SK-MEL-5 (cell line): ENCODE measurements at regions of chr2 and their contacts with region 1.

Region 1: DNA sequence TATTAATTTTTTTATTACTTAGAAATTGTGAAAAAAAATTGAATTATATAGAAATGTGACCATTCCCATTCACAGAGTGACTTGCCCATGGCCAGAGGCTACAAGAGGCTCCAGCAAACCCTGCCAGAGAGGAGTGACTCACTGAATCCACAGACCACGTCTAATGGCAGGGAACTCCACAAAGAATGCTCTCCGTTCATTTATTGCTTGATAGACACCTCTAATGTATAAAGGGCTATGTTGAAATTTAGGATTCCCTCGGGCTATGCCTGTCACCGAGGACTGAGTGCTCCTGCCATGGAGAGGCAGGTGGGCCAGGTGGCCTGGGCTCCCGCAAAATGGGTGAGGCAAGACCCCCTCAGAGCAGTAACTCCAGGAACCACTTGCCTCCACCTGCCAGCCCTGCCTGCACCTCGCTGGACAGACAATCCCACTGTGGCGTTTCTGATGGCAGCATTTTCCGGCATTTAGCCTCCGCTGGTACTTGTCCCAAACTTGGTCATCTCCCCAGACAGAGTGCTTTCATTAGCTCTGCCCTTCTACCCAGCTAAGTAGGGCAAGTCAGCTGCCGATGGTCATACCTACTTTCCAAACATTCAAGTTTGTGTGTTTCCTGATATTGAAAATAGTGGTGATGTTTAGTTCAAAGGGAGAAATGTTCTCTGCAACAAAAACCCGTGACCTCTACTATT is 200.3 kb downstream of the PRKCE start:
- DNase-seq: peak; percentile 62

Region 2: DNA sequence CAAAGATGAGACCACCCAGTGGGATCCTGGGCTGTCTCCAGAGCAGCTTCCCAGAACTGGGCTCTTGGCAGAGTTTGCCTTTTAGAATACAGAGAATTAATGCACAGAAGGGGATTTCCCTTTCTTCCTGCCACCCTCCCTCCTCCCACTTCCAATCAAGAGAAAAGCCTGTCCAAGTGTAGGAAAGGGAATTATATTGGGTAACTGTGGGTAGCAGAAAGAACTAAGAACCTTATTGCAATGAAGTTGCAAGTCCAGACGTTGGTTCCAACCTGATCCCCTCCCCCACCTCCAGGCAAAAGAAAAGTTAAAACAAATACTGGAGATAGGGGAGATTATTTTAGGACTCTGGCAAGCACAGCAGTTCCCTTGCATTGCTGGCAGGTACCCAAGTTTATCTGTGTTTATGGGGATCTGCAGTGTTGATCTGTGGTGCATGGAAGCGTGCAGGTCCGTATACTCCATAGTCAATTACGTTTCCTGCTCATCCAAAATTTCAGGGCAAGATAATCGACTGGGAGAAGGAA is 86.0 kb before region 1 on chr2:
- in situ Hi-C with region 1: loop called (anchors 10 kb)
- DNase-seq: no peak

Region 3: GRCh38 chr2:46389417-46389916 is 537.7 kb after region 1 on chr2:
- in situ Hi-C with region 1: no loop called
- DNase-seq: no peak